Cardiac septum (tissue), 1 donor: ENCODE measurements at regions of chr5 and their contacts with region 1.

Region 1: GRCh38 chr5:140632150-140633020 is 590 bp downstream of the CD14 start:
- DNase-seq: peak; percentile 78

Region 2: GRCh38 chr5:140372971-140373487 is 259.4 kb before region 1 on chr5:
- intact Hi-C with region 1: loop called (anchors 5 kb)
- DNase-seq: peak; percentile 82

Region 3: DNA sequence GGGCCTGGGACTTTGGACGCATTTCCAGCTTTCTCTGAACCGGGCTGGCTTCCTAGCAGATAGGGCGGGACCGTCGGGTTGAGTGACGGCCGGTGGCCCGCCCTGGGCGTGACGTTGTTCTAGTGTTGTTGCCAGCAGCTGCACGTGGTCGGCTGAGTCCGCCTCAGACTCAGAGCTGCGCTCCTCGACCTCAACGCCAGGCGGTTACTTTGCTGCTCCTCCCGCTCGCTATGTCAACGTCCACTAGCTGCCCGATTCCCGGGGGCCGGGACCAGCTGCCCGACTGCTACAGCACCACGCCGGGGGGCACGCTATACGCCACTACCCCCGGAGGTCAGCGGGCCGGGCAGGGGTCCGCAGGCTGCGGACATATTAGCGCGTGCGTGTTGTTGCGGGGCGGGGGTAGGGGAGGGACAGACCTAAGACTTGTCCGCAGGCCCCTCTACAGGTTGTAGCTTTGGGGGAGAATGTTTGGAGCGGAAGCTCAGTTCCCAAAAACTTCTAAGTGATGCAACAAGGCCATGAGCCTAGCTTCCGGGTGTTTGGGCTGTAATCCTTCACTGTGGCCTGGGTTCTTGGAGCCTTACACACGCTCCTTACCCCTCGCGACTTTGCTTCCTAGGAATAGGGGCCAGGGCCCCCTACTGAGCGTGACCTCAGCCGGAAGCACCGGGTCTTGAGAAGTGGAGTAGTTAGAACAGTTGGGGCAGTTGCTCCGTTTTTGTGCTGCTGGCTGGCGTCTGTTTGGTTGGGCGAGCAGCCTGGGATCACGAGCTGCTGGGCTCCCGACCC is 84.7 kb before region 1 on chr5 and contains the start of gene EIF4EBP3:
- intact Hi-C with region 1: loop called (anchors 5 kb)
- DNase-seq: peak; percentile 99
- total RNA-seq, gene EIF4EBP3: 20.6 TPM